Activated T-helper 1 cell treated with anti-CD3 and anti-CD28 coated beads, Interleukin-12 subunit alpha, Interleukin-12 subunit beta, Interleukin-2, Interleukin-4 antibody, amounts not matched to agents 30 ng/mL and 10 ng/mL and 1 ng/mL, durations not matched to agents 14 hours and 24 hours and 36 hours (primary cell): ENCODE measurements at regions of chr2 and their contacts with region 1.

Region 1: DNA sequence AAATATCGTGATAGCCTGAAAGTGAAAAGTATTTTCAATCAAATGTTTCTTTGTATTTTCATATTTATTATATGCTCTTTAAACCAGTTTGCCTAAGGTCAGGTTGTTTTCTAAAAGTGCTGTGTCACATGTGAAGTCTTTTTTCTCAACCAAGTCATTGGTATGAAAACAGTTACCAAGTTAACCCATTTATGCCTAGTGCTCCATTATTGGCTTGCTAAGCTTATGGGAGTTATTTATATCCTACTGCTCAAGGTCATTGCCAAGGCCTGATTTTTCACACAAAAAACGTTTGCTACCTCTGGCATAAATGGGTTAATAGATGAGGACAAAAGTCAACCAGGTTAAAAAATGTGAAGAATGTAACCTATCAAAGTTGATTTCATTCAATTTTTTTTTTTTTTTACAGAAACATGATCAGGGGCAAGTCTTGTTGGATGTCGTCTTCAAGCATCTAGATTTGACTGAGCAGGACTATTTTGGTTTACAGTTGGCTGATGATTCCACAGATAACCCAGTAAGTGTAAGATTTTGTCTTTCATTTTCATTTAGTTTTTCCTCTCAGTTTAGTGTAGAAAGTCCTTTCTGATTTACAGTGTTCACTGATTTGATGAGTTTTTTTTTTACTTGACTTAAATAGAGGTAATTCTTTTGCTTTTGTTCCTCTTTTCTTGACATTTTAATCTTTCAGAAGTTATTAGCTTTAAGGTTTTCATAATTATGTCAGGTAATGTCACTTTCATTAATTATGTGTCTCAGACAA is 102.6 kb downstream of the PTPN4 start:
- DNase-seq: no peak
- H3K4me3 Mint-ChIP-seq: peak overlapping the region; percentile 34
- H3K27ac Mint-ChIP-seq: peak overlapping the region; percentile 74
- H3K4me1 Mint-ChIP-seq: peaks cover 43% of the 10 kb centered on the region
- H3K27me3 Mint-ChIP-seq: peaks cover 3% of the 10 kb centered on the region

Region 2: DNA sequence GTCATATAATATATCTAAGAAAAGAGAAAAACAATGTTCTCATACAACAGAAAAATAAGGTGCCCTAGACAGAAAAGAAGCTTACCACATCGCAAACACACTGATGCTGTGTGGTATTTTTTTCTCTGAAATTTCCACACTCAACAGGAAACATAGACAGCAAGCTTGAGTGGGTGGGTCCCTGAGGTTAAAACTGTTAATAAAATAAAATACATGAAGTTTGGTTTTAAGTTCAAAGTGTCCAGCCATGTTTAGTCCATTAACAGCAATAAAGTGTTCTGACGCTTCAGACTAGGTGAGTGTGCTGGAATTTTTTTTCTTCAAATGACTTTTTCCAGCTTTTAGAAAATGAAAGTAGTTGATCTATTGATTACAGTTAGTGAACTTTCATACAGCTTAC is 67.2 kb after region 1 on chr2:
- intact Hi-C with region 1: loop called (anchors 1 kb)
- DNase-seq: peak; percentile 34
- H3K4me3 Mint-ChIP-seq: peak overlapping the region; percentile 72
- H3K27ac Mint-ChIP-seq: peak overlapping the region; percentile 88
- H3K4me1 Mint-ChIP-seq: peaks cover 60% of the 10 kb centered on the region
- H3K27me3 Mint-ChIP-seq: no peaks in the 10 kb centered on the region

Region 3: DNA sequence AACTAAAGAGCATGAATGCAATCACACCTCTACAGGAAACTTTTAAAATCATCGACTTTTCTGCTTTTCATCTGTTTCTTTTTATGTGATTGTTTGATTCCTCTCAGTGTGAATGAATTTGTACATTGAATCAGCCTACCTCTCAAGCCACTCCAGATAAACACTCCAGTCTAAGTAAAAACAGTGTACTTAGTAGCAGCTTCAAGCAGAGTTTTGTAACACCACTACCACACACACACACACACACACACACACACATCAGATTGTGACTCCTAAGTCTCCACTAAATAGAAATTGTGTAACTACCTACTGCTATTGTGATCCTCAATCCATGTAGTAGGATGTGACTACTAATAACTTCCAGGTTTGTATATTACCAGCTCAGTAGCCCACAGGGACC is 85.2 kb after region 1 on chr2:
- intact Hi-C with region 1: loop called (anchors 5 kb)
- DNase-seq: no peak
- H3K4me3 Mint-ChIP-seq: no peak overlapping the region
- H3K27ac Mint-ChIP-seq: no peak overlapping the region
- H3K4me1 Mint-ChIP-seq: peaks cover 15% of the 10 kb centered on the region
- H3K27me3 Mint-ChIP-seq: no peaks in the 10 kb centered on the region